Aorta (tissue), 5 donors: ENCODE measurements at regions of chr14 and their contacts with region 1.

Region 1: GRCh38 chr14:49461529-49462401 is 124.4 kb downstream of the RPS29 start:
- DNase-seq: no peak
- ATAC-seq: no peak
- H3K4me3 ChIP-seq: no peak overlapping the region
- H3K27ac ChIP-seq: no peak overlapping the region
- H3K4me1 ChIP-seq: no peaks in the 10 kb centered on the region
- H3K27me3 ChIP-seq: no peaks in the 10 kb centered on the region

Region 2: GRCh38 chr14:49276876-49277275 is 184.9 kb before region 1 on chr14:
- intact Hi-C with region 1: no loop called
- DNase-seq: no peak
- ATAC-seq: no peak
- H3K4me3 ChIP-seq: no peak overlapping the region
- H3K27ac ChIP-seq: no peak overlapping the region
- H3K4me1 ChIP-seq: no peaks in the 10 kb centered on the region
- H3K27me3 ChIP-seq: no peaks in the 10 kb centered on the region

Region 3: DNA sequence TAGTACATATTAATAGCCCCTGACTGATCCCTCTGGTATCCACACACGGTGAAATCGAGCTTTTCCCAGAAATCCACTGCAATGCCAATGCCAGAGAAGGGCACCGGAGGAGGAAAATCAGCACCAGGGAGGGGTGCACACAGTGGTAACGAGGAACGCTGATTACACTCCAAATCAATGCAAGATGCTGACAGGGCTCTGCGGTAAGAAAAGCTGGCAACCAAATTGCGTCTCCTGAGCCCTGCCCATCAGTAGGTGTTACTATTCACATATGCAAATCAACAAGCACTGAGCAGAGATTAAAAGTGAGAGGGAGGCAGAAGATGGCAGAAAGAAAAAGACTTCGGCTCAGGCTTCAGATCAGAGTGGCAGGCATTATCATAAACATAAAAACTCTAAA is 34.6 kb before region 1 on chr14:
- intact Hi-C with region 1: no loop called
- DNase-seq: no peak
- ATAC-seq: no peak
- H3K4me3 ChIP-seq: no peak overlapping the region
- H3K27ac ChIP-seq: no peak overlapping the region
- H3K4me1 ChIP-seq: no peaks in the 10 kb centered on the region
- H3K27me3 ChIP-seq: no peaks in the 10 kb centered on the region

Region 4: GRCh38 chr14:49497725-49498348 is 36.1 kb after region 1 on chr14:
- intact Hi-C with region 1: loop called in 1 of 2 experiments (anchors 2 kb)
- DNase-seq: no peak
- ATAC-seq: no peak
- H3K4me3 ChIP-seq: no peak overlapping the region
- H3K27ac ChIP-seq: no peak overlapping the region
- H3K4me1 ChIP-seq: no peaks in the 10 kb centered on the region
- H3K27me3 ChIP-seq: no peaks in the 10 kb centered on the region

Region 5: GRCh38 chr14:49508124-49508523 is 46.4 kb after region 1 on chr14:
- intact Hi-C with region 1: no loop called
- DNase-seq: no peak
- ATAC-seq: no peak
- H3K4me3 ChIP-seq: no peak overlapping the region
- H3K27ac ChIP-seq: no peak overlapping the region
- H3K4me1 ChIP-seq: no peaks in the 10 kb centered on the region
- H3K27me3 ChIP-seq: no peaks in the 10 kb centered on the region